GM18951 (cell line): ENCODE measurements at regions of chr17 and their contacts with region 1.

Region 1: DNA sequence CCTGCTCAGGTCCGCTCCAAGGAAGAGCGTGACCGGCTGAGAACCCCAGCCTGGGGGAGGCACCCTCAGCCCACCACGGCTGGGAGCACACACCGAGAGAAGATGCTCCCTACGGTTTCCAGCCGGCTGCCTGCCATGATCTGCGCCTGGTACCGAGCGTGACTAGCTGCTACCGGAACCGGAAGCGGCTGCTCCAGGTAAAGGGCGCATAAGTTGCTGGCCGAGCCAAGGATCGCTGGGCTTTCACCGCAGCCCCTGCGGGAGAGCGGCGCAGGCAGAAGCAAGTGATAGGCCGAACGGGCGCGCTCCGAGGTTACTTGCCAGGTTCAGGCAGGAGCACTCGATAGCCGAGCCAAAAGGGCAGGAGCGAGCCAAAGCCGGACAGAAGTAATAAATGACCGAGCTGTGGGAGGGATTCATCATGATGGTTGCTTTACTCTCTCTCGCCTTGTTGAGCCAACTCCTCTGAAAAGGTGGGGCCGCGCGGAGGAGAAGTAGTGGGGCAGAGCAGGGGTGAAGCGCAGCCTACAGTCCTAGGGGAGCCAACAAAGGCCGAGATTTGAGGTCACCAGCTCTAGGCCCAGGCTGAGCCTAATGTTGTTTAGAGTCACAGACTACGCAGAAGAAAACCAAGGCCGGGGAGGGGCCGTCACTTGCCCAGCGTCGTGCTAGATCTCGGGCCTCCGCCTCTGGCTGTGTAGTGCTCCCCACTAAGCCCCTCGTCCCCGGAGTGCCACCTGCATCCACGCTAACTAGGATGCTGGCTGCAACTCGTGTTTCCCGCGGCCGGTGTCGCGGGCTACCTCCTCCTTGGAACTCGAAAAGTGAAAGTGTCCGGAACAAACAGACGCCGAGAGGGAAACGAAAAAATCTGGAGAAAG is at the start of gene MRPS23:
- POLR2A ChIP-seq: peak; percentile 87

Region 2: DNA sequence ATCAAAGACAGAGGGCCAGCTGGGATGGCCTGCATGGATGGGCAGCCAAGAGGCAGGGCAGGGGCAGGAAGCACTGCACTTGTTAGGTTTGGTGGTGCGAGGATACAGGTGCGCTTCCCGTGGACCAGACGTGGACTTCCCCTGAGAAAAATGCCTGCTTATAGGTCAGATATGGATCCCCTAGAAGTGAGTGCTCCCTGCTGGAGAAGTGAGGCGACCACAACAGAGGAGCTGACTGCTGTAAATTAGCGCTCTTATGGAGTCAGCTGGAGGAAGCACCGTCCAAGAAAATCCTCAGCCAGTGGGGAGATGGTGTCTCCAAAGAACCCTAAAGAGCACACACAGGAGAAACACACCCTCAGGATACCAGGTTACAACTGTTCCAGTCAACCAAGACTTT is 77.3 kb before region 1 on chr17:
- in situ Hi-C with region 1: no loop called
- POLR2A ChIP-seq: no peak

Region 3: GRCh38 chr17:57970706-57971105 is 120.6 kb after region 1 on chr17:
- in situ Hi-C with region 1: no loop called
- POLR2A ChIP-seq: no peak

Region 4: GRCh38 chr17:58096892-58097291 is 246.8 kb after region 1 on chr17:
- in situ Hi-C with region 1: no loop called
- POLR2A ChIP-seq: no peak

Region 5: GRCh38 chr17:58112970-58113631 is 263.0 kb after region 1 on chr17:
- in situ Hi-C with region 1: loop called (anchors 10 kb)
- POLR2A ChIP-seq: no peak